ENCODE measurements at regions of chr9 and their contacts with region 1.

Region 1: DNA sequence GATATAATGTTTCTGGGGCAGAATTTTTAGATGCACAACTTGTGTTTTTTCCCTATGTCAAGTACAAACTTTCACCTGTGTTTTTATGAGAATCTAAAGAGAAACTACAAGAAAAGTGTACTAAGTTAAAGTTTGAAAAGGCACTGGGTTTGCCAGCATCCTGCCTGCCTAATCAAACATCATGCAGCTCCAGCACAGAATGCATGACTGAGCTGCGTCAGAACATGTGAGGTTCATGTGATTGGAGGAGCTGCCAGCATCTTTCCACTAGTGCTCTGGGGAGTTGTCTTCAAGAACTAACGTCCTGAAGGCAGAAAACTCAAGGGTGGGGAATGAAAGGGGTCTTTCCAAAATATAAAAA is 46.1 kb upstream of the RIC1 start:
- DNase-seq: peak; percentile 61
- H3K4me3 Mint-ChIP-seq: no peak overlapping the region
- H3K27ac Mint-ChIP-seq: peak overlapping the region; percentile 80
- H3K4me1 Mint-ChIP-seq: peaks cover 66% of the 10 kb centered on the region
- H3K27me3 Mint-ChIP-seq: no peaks in the 10 kb centered on the region

Region 2: GRCh38 chr9:4792572-4793458 is 790.0 kb before region 1 on chr9 and contains the start of gene RCL1:
- CTCF ChIA-PET with region 1: no interaction called
- POLR2A ChIA-PET with region 1: no interaction called
- intact Hi-C with region 1: loop called (anchors 1 kb)
- DNase-seq: peak; percentile 98
- H3K4me3 Mint-ChIP-seq: peak within 1 kb of the TSS; percentile 93
- H3K27ac Mint-ChIP-seq: peak within 1 kb of the TSS; percentile 86
- H3K4me1 Mint-ChIP-seq: peaks cover 49% of the 10 kb centered on the region
- H3K27me3 Mint-ChIP-seq: no peaks in the 10 kb centered on the region
- total RNA-seq, gene RCL1: 26.0 to 28.2 TPM

Region 3: DNA sequence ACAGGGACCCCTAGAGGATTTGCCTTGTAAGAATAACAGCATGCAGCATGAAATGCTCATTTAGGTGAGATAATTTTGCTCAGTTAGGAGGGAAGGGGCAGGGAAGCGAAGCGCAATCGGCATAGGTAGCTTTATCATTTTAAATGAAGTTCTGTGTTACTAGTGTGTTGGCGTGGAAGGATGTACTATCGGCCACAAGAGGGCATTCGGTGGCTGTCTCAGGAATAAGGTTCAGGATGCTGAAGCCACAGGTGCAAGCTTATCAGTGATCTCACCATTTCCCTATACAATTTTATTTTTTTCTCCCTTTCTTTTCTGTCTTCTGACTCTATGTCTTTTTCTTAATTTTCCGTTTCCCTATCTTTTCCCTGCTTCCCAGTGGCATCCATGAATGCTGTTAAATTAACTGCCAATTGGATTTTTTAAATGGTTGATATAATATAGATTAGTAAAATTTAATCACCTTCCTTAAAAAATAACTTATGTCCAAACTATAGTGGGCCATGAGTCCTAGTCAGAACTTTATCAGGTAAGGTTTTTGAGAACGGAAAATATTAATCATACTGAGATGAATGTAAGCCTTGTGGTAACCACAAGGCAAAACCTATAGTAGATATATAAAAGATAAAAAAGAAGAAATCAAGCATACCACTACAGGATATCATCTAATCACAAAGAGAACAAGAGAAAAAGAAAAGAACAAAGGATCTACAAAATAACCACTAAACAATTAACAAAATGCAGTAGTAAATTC is 396.2 kb before region 1 on chr9:
- CTCF ChIA-PET with region 1: interaction called, 25 read pairs
- POLR2A ChIA-PET with region 1: no interaction called
- intact Hi-C with region 1: no loop called
- DNase-seq: peak; percentile 74
- H3K4me3 Mint-ChIP-seq: no peak overlapping the region
- H3K27ac Mint-ChIP-seq: no peak overlapping the region
- H3K4me1 Mint-ChIP-seq: peaks cover 15% of the 10 kb centered on the region
- H3K27me3 Mint-ChIP-seq: no peaks in the 10 kb centered on the region

Region 4: GRCh38 chr9:5450359-5451091 is 132.3 kb before region 1 on chr9 and contains the start of gene CD274:
- CTCF ChIA-PET with region 1: interaction called, 63 read pairs
- POLR2A ChIA-PET with region 1: interaction called, 26 read pairs
- intact Hi-C with region 1: loop called (anchors 1 kb)
- DNase-seq: peak; percentile 92
- H3K4me3 Mint-ChIP-seq: peak within 1 kb of the TSS; percentile 86
- H3K27ac Mint-ChIP-seq: peak within 1 kb of the TSS; percentile 90
- H3K4me1 Mint-ChIP-seq: peaks cover 59% of the 10 kb centered on the region
- H3K27me3 Mint-ChIP-seq: no peaks in the 10 kb centered on the region
- total RNA-seq, gene CD274: 28.3 to 32.4 TPM

Region 5: GRCh38 chr9:5493679-5494511 is 88.9 kb before region 1 on chr9:
- CTCF ChIA-PET with region 1: interaction called, 6 read pairs
- POLR2A ChIA-PET with region 1: interaction called, 3 read pairs
- intact Hi-C with region 1: loop called (anchors 1 kb)
- DNase-seq: peak; percentile 70
- H3K4me3 Mint-ChIP-seq: no peak overlapping the region
- H3K27ac Mint-ChIP-seq: peak overlapping the region; percentile 72
- H3K4me1 Mint-ChIP-seq: peaks cover 23% of the 10 kb centered on the region
- H3K27me3 Mint-ChIP-seq: no peaks in the 10 kb centered on the region

Region 6: DNA sequence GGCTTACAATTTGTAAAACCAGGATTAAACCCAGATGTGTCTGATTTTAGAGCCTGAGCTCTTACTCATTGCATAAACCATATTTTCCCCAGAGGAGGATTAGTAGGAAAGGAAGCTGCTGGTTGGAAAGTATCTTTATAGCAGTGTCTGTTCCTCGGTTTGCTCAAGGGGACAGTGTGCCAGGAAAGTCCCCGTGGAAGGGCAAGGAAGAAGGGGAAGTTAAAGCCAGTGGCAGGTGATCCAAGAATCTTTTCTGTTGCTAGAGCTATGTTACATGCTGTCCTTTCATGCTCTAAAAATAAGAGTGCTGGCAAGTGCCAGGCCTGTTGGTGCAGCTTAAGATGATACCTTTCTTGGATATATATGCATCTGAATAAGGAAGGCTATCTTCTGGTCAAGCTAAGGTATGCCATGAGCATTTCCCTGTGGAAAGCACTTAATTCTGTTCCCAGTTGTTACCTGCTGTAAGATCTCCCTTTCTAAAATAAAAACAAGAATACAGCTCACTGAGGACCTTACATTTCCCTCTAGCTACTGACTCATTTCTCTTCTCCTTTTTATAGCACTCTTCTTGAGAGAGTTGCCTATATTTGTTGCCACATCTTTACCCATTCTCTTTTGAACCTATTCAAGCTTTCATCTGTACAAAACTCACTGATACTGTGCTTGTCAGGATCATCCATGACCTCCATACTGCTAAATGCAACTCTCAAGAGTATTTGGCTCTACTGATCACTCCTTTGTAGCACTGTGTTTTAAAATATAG is 64.5 kb before region 1 on chr9:
- CTCF ChIA-PET with region 1: no interaction called
- POLR2A ChIA-PET with region 1: interaction called, 3 read pairs
- intact Hi-C with region 1: loop called (anchors 2 kb)
- DNase-seq: no peak
- H3K4me3 Mint-ChIP-seq: no peak overlapping the region
- H3K27ac Mint-ChIP-seq: peak overlapping the region; percentile 47
- H3K4me1 Mint-ChIP-seq: peaks cover 31% of the 10 kb centered on the region
- H3K27me3 Mint-ChIP-seq: no peaks in the 10 kb centered on the region